Left cardiac atrium (tissue), 4 donors: ENCODE measurements at regions of chr10 and their contacts with region 1.

Region 1: DNA sequence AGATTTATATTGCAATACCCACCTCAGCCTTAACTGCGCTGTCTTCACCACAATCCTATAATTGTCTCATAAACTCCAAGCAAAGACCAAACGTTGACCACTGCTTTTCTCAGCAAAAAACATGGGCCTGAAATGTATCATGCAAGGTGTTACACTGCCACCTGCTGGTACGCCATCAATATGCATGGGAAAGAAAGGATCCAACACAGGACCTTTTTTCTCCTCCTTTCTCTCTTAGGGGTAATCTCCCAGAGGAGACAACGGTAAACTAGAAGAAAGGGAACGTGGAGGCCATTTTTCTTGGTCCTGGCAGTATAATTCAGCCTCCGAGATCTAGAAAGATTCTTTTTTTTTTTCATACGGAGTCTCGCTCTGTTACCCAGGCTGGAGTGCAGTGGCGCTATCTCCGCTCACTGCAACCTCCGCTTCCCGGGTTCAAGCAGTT is 79.1 kb upstream of the MPP7 start:
- DNase-seq: peak; percentile 81
- ATAC-seq: peak; percentile 97

Region 2: DNA sequence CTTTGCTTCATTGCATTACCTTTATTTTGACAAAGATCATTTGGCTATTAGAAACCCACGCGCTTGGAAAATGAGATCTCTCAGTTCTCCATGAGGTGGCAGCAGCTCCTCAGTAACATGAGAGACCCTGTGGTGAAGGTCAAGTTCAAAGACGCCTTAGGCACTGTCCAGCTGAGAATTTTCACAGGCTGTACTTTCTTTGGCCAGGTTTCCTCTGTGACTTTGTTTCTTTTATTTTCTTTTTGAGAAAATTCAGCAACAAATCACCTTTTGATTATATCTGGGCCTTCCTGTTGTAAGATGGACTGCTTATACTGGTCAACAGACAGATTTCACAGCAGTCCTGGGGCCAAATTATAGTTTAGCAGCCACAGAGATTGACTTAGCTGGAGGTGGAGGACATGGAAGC is 823.3 kb before region 1 on chr10:
- intact Hi-C with region 1: loop called in 1 of 2 experiments (anchors 10 kb)
- DNase-seq: peak; percentile 36
- ATAC-seq: peak; percentile 84 to 87

Region 3: GRCh38 chr10:27742195-27743011 is 639.5 kb before region 1 on chr10:
- intact Hi-C with region 1: loop called in 1 of 2 experiments (anchors 10 kb)
- DNase-seq: peak; percentile 85
- ATAC-seq: peak; percentile 91 to 94

Region 4: GRCh38 chr10:28250782-28251181 is 131.1 kb before region 1 on chr10:
- intact Hi-C with region 1: loop called (anchors 2 to 5 kb)
- DNase-seq: no peak
- ATAC-seq: no peak

Region 5: DNA sequence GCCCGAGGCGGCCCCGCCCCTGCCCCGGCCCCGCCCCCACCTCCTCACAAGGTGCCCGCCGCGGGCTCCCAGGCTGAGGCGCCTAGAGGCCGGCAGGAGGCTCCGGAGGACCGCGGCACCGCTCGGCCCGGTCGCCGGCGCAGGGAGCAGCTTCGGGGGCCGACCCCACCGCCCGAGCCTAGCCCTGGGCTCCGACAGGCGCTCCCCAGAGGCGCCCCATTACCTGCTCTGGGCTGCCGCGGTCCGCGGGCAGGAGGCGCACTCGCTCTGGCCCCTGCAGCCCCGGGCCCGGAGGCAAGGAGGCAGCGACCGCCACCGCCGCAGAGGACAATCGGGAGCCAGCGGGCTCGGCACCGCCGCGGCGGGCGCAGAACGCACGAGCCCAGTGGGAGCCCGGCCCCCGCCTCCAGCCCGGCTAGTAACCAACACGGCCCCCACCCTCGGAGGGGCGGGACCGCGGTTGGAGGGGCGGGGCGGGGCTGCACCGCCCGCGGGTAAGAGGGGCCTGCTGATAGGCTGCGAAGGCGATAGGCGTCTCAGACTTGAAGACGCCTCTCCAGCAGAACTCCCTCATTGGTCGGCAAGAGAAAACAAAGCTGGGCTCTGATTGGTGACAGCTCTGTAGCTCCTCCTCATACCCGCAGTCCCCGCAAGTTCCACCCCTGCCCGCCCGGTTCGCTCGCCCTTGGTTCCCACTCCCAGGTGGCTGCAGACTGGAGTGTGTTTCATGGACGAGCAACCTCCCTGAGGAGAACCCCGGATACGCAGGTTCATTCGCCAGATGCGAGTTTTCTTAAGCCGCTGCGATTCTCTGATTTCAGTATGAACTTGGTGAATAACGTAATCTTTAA is 79.1 kb before region 1 on chr10 and contains the start of gene MPP7:
- intact Hi-C with region 1: loop called in 1 of 2 experiments (anchors 2 kb)
- DNase-seq: peak; percentile 95
- ATAC-seq: peak; percentile 99
- total RNA-seq, gene MPP7: 9.7 to 11.0 TPM